Psoas muscle (tissue), 8 donors: ENCODE measurements at regions of chr4 and their contacts with region 1.

Region 1: GRCh38 chr4:83582289-83582769 is 46.4 kb downstream of the GPAT3 start:
- DNase-seq: peak in 1 of 2 donors; percentile 24
- ATAC-seq: peak; percentile 85 to 88 (median 86)
- H3K4me3 ChIP-seq: no peak overlapping the region
- H3K27ac ChIP-seq: peak overlapping the region; percentile 60
- H3K4me1 ChIP-seq: peaks cover 15% of the 10 kb centered on the region
- H3K27me3 ChIP-seq: no peaks in the 10 kb centered on the region
- CTCF ChIP-seq: peak; percentile 49

Region 2: DNA sequence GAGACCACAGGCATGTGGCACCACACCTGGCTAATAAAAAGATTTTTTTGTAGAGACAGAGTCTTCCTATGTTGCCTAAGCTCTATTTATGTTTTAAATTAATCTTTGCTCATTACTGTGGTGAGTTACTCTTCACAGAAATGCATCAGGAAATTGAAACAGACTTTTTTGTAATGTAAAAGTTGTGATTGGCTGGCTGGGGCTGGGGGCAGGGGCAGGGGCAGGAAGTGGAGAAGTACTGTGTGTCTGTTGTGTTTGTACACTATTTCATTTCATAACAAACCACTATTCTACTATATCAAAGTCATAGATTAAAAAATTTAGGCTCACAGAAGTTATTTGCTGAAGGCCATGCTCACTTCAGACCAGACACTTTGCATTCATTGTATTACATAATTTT is 78.4 kb before region 1 on chr4:
- intact Hi-C with region 1: loop called in 1 of 2 experiments (anchors 1 kb)
- DNase-seq: no peak
- ATAC-seq: no peak
- H3K4me3 ChIP-seq: no peak overlapping the region
- H3K27ac ChIP-seq: no peak overlapping the region
- H3K4me1 ChIP-seq: no peaks in the 10 kb centered on the region
- H3K27me3 ChIP-seq: no peaks in the 10 kb centered on the region
- CTCF ChIP-seq: no peak

Region 3: GRCh38 chr4:83516042-83516772 is 66.1 kb before region 1 on chr4:
- intact Hi-C with region 1: no loop called
- DNase-seq: peak in 1 of 2 donors; percentile 17
- ATAC-seq: peak; percentile 62 to 91 (median 88)
- H3K4me3 ChIP-seq: no peak overlapping the region
- H3K27ac ChIP-seq: peak overlapping the region; percentile 80
- H3K4me1 ChIP-seq: peaks cover 7% of the 10 kb centered on the region
- H3K27me3 ChIP-seq: no peaks in the 10 kb centered on the region
- CTCF ChIP-seq: no peak

Region 4: DNA sequence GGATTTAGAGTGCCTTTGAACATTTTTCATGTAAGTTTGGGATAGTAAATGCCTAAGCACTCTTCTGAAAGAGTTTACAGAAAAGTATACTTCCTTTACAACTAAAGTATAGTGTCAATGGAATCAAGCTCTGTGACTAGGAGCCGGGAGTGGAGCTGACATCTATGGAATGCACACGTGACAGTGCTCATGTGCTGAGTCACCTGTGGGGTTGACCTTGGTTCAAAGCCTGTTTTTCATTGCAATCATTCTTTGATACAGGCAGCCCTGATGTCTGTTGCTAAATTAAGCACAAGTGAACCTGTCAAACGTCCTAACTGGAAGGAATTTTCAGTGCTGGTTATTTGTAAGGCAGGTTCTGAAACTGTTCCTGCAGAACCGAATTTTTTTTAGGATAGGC is 36.1 kb after region 1 on chr4:
- intact Hi-C with region 1: loop called in 1 of 2 experiments (anchors 5 kb)
- DNase-seq: peak; percentile 30 to 56
- ATAC-seq: peak; percentile 97 to 99 (median 99)
- H3K4me3 ChIP-seq: no peak overlapping the region
- H3K27ac ChIP-seq: peak overlapping the region; percentile 88
- H3K4me1 ChIP-seq: peaks cover 21% of the 10 kb centered on the region
- H3K27me3 ChIP-seq: no peaks in the 10 kb centered on the region
- CTCF ChIP-seq: no peak

Region 5: DNA sequence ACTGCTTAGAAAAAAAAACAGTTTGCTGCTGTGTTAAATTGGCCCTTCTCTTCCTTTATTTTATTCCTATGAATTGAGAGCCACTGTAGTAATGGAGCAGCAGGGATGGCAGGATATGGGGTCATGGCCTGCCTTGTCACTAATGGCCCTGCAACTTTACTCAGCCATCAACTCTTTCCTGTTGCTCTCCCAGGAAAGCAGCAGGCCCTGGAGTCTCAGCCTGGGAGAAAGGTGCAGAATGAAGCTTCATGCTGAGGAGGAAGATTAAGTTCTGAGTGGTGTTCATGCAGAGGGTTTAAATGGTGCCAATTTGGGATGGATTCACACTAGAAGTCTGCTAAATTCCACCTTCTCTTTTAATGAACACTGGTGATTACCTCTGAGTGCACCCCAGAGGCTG is 239.2 kb after region 1 on chr4:
- intact Hi-C with region 1: no loop called
- DNase-seq: no peak
- ATAC-seq: no peak
- H3K4me3 ChIP-seq: no peak overlapping the region
- H3K27ac ChIP-seq: no peak overlapping the region
- H3K4me1 ChIP-seq: no peaks in the 10 kb centered on the region
- H3K27me3 ChIP-seq: no peaks in the 10 kb centered on the region
- CTCF ChIP-seq: no peak